ENCODE measurements at regions of chr19 and their contacts with region 1.

Region 1: DNA sequence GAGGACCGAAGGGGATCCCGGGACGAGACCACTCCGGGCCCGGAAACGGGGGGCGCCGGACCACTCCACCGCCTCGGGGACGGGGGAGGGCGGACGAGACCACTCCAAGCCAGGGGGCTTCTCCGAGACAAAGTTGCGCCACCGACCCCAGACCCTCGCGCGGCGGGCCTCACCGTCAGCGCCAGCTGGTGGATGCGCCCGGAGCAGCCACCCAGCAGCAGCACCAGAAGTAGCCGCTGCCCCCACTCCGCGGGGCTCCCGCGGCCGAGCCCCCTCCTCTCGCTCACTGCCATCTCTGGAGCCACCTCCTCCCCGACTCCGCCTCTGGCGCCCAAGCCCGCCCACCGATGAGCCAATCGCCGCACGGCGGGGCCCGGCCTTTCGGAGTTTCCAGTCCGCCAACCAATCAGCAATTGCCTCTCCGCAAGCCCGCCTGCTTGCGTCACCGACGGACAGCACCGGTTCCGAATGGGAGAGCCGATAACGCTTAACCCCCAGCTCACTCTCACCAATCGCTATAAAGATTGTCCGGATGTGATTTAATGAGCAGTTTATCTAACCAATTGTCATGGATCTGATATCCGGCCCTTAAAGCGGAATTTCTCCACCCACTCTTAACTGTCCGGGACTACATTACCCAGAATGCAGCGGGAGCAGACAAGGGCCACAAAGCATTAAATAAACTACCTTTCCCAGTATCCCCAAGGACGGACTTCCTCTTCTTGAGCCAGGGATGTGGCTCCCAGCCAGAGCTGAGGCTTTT is at the start of gene GPR108:
- DNase-seq: peak; percentile 100
- ATAC-seq: peak; percentile 82 to 88
- H3K4me3 ChIP-seq: peak within 1 kb of the TSS; percentile 83 to 98 (median 94)
- H3K27ac ChIP-seq: peak within 1 kb of the TSS; percentile 96 to 100 (median 98)
- H3K4me1 ChIP-seq: peaks cover 37 to 45% of the 10 kb centered on the region in 2 donors
- H3K27me3 ChIP-seq: no peaks in the 10 kb centered on the region
- CTCF ChIP-seq: peak in 1 of 5 experiments; percentile 8
- POLR2A ChIP-seq: peak; percentile 46 to 61
- total RNA-seq, gene GPR108: 22.6 to 40.3 (median 32.3) TPM

Region 2: GRCh38 chr19:6372594-6373095 is 364.8 kb before region 1 on chr19 and contains the start of gene ALKBH7:
- in situ Hi-C with region 1: loop called in 1 of 4 experiments (anchors 25 kb)
- intact Hi-C with region 1: loop called (anchors 1 kb)
- DNase-seq: peak; percentile 100
- ATAC-seq: peak; percentile 92 to 93
- H3K4me3 ChIP-seq: peak within 1 kb of the TSS; percentile 86 to 99 (median 94)
- H3K27ac ChIP-seq: peak within 1 kb of the TSS; percentile 98 to 100 (median 100)
- H3K4me1 ChIP-seq: peaks cover 0 to 10% of the 10 kb centered on the region in 2 donors
- H3K27me3 ChIP-seq: no peaks in the 10 kb centered on the region
- CTCF ChIP-seq: peak in 1 of 5 experiments; percentile 5
- POLR2A ChIP-seq: peak; percentile 55 to 65
- total RNA-seq, gene ALKBH7: 42.2 to 112 (median 90.4) TPM

Region 3: DNA sequence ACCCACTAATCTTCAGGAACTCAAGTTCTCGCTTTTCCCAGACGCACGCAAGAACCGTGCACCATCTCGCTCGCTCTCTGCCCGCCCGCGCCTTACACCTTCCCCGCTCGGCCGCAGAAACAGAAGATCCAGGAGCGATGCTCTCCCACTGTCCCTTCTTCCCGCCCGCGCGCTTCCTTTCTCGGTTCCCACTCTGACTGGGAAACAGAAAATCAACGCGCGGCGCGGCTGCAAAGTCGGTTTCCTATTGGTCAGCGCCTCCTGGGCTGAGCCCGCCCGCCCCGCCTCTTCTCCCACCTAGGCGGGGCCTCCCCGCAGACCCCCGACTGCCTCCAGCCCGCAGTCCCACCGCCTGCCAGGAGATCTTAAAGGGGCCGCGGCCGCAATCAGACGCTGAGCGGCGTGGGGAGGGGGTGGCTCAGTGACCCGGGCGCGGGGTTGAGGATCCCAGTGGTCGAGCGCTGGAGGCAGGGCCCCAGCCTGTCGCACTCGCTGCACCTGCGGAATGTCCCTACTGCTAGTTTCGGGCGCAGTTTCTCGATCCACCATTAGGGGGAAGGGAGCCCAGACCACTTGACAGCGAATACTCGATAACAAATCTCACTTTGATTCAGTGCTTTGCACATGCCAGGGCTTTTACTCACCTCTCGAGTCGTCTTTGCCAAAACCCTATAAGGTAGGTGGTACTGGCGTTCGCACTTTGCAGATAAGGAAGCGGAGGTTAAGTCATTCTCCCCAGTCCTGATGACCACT is 277.2 kb before region 1 on chr19:
- in situ Hi-C with region 1: no loop called
- intact Hi-C with region 1: loop called (anchors 10 kb)
- DNase-seq: peak; percentile 90 to 94
- ATAC-seq: peak; percentile 94 to 95
- H3K4me3 ChIP-seq: peak overlapping the region; percentile 64 to 82 (median 71)
- H3K27ac ChIP-seq: peak overlapping the region; percentile 78 to 81 (median 80)
- H3K4me1 ChIP-seq: peaks cover 5 to 14% of the 10 kb centered on the region in 2 donors
- H3K27me3 ChIP-seq: peaks cover 18 to 23% (median 21%) of the 10 kb centered on the region in 3 donors
- CTCF ChIP-seq: peak in 4 of 5 experiments; percentile 58 to 79 (median 74)
- POLR2A ChIP-seq: no peak

Region 4: DNA sequence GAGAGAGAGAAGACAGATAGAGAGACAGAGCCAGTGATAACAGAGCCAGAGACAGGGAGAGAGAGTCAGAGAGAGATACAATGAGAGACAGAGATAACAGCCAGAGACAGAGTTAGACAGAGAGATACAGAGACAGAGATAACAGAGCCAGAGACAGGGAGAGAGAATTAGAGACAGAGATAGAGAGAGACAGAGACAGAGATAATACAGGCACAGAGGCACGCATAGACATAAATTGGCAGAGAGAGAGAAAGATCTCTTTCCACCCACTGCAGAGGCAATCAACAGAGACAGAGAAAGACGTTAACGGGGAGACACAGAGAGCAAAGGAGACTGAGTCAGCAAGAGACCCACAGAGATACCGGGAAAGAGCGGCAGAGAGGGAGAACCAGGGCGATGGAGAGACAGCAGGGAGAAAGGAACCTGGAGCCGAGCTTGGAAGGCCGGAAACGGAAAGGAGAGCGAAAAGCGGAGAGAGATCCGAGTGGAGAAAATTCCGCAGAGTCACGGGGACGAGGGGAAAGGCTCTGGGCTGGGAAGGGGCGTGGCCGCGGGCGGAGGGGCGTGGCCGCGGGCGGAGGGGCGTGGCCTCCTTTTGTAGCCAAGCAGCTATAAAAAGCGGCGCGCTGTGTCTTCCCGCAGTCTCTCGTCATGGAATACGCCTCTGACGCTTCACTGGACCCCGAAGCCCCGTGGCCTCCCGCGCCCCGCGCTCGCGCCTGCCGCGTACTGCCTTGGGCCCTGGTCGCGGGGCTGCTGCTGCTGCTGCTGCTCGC is 206.9 kb before region 1 on chr19 and contains the start of gene TNFSF9:
- in situ Hi-C with region 1: no loop called
- intact Hi-C with region 1: loop called (anchors 5 kb)
- DNase-seq: peak; percentile 82 to 85
- ATAC-seq: peak; percentile 95
- H3K4me3 ChIP-seq: peak within 1 kb of the TSS; percentile 67 to 75 (median 74)
- H3K27ac ChIP-seq: peak within 1 kb of the TSS; percentile 74 to 90 (median 86)
- H3K4me1 ChIP-seq: peaks cover 25 to 29% of the 10 kb centered on the region in 2 donors
- H3K27me3 ChIP-seq: peaks cover 8 to 23% (median 10%) of the 10 kb centered on the region in 3 donors
- CTCF ChIP-seq: no peak
- POLR2A ChIP-seq: peak; percentile 82 to 92
- total RNA-seq, gene TNFSF9: 1.1 to 1.8 TPM in 2 of 4 donors, not detected in the others

Region 5: DNA sequence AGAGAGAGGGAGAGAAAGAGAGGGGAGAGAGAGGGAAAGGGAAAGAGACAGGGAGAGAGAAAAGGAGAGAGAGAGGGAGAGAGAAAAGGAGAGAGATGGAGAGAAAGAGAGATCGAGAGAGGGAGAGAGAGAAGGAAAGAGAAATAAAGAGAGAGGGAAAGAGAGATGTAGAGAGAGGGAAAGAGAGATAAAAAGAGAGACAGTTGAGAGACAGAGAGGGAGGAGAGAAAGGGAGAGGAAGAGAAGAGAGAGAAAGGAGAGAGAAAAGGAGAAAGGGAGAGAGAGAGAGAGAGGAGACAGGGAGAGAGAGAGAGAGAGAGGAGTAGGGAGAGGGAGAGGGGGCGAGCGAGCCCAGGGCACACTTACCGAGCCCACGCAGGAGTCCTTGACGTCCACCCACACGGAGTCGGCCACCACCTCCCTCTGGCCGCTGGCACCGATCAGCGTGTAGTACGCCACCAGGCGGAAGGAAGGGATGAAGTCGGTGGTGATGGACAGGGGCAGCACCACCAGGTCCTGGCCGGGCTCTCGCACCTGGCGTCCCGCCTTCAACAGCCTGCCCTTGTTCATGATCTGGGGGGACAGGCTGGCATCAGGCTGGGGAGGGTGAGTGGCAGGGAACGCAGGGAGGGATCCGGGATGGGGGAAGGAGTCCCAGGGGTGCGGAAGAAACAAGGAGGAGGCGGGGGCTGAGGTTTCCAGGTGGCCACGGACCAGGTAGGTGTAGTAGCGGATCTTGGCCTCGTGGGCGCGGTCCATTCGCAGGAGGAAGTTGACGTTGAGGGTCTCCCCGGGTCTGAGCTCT is 27.0 kb before region 1 on chr19:
- in situ Hi-C with region 1: no loop called
- intact Hi-C with region 1: no loop called
- DNase-seq: no peak
- ATAC-seq: no peak
- H3K4me3 ChIP-seq: no peak overlapping the region
- H3K27ac ChIP-seq: no peak overlapping the region
- H3K4me1 ChIP-seq: no peaks in the 10 kb centered on the region
- H3K27me3 ChIP-seq: peaks cover 0 to 10% (median 6%) of the 10 kb centered on the region in 3 donors
- CTCF ChIP-seq: no peak
- POLR2A ChIP-seq: no peak

Region 6: GRCh38 chr19:6723108-6723618 is 14.3 kb before region 1 on chr19:
- in situ Hi-C with region 1: no loop called
- intact Hi-C with region 1: no loop called
- DNase-seq: peak in 1 of 2 donors; percentile 58
- ATAC-seq: peak; percentile 39 to 51
- H3K4me3 ChIP-seq: no peak overlapping the region
- H3K27ac ChIP-seq: peak overlapping the region in 2 of 4 donors; percentile 9 to 41
- H3K4me1 ChIP-seq: no peaks in the 10 kb centered on the region
- H3K27me3 ChIP-seq: no peaks in the 10 kb centered on the region
- CTCF ChIP-seq: no peak
- POLR2A ChIP-seq: no peak

Region 7: DNA sequence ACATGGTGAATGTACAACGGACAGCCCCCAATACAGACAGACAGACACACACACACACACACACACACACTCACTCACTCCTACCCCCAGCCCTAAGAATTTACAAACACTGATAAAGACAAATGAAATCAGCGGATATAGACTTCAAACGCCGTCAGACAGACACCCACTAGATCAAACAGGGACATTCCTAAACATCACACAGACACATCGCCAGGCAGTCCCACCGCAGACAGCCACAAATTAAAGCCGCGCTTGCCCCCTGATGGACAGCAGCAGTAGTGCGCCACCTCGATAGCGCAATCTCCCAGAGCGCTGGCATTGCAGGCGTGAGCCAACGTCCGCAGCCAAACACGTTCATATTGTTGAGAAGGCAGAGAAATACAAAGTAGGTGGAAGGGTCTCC is 125.2 kb after region 1 on chr19:
- in situ Hi-C with region 1: loop called in 1 of 4 experiments (anchors 10 kb)
- intact Hi-C with region 1: loop called (anchors 2 kb)
- DNase-seq: peak; percentile 19 to 53
- ATAC-seq: peak in 1 of 2 donors; percentile 73
- H3K4me3 ChIP-seq: peak overlapping the region in 3 of 4 donors; percentile 20 to 39 (median 29)
- H3K27ac ChIP-seq: no peak overlapping the region
- H3K4me1 ChIP-seq: no peaks in the 10 kb centered on the region
- H3K27me3 ChIP-seq: no peaks in the 10 kb centered on the region
- CTCF ChIP-seq: peak; percentile 46 to 74 (median 68)
- POLR2A ChIP-seq: no peak

Region 8: DNA sequence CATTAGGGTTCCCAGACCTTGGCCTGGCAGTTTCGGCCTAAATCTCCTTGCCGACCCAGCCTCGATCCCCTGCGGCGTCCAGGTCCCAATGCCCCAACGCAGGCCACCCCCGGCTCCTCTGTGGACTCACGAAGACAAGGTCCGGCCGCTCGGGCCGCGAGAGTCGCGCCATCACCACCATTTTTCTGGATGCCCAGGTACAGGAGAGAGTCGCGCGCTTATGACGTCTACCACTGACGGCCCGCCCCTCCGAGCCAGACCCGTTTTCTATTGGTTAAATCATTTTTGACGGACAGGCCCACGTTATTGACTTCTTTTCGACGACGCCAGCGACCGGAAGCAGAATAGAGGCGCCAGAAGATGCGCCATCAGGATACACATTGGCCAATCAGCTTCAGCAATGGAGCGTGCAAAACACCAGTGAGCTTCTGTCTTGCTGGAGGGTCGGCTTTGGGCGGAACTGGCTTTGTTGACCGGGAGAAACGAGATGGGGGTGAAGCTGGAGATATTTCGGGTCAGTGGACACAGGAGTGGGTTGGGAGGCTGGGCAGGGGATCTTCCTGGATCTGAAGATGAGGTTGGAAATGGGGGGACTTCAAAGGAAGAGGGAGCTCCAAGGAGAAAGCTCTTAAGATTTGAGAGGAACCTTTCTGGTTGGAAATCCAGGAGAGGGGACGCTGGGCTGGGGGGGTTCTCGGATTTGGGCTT is 892.0 kb after region 1 on chr19 and contains the starts of genes PET100 and XAB2:
- in situ Hi-C with region 1: no loop called
- intact Hi-C with region 1: loop called (anchors 10 kb)
- DNase-seq: peak; percentile 98 to 99
- ATAC-seq: peak; percentile 100
- H3K4me3 ChIP-seq: peak within 1 kb of the TSS; percentile 83 to 100 (median 95)
- H3K27ac ChIP-seq: peak within 1 kb of the TSS; percentile 80 to 92 (median 88)
- H3K4me1 ChIP-seq: peaks cover 18 to 27% of the 10 kb centered on the region in 2 donors
- H3K27me3 ChIP-seq: no peaks in the 10 kb centered on the region
- CTCF ChIP-seq: no peak
- POLR2A ChIP-seq: peak; percentile 50 to 52
- total RNA-seq, gene PET100: 9.5 to 15.1 (median 12.9) TPM
- total RNA-seq, gene XAB2: 29.6 to 51.2 (median 31.1) TPM